Posterior vena cava (tissue), 2 donors: ENCODE measurements at regions of chr16 and their contacts with region 1.

Region 1: DNA sequence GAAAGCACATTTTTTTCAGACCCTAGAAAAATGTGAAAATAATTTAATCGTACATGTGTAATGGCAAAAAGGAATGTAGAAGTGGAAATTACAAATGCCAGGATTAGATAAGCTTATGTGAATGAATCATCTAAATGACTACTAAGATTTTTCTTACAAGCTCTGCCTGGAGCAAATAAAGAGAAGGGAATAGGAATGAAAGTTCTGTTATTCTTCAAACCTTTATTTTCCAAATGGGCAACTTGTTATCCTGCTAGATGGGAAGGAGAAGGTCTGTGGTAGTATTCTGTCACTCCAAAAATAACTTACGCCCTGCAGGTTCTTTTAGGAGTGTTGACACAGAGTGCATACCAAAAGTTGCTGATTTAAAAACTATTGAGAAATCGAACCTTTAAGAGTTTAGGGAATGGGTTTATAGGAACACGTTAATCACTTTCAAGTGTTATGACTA is 9.7 kb downstream of the CTCF start:
- DNase-seq: no peak

Region 2: DNA sequence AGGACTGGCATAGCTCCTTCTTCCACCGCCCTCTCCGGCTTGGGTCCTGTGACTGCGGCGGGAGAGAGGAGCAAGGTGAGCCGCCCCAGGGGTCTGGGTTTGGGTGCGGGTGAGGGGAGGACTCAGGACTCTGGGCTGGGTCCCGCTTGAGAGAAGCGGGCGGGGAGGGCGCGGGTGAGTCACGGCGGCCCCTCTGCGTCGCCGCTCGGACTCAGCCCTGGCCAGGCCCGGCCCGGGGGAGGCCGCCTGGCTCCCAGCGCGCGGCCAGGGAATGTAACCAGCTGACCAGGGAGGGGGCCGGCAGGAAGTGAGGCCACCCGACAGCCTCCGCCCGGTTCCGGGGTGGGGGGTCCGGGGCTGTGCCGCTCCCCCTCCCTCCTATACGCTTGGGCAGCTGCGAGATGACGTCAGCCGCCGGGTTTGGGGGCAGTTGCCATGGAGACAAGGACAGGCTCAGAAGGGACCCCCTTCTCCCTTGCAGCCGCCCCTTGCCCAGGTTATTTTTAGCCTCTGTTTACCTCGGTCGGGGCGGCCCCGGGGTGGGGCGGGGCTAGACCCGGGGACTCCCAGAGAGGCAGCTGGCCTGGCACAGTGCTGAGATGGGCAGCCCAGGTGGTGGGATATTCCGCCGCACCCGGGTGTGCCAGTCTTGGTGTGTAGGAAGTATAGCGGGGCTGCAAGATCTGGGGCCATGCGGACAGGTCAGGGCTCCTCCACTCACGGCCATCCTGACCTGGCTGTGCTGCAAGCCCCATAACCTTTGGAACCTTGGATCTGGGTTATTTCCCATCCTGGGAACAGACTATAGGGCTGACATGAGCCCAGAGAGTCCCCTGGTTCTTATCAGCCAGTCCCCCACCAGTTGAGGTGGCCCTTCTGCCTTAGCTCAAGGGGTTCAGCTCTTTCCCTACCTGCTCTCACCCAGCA is 41.7 kb before region 1 on chr16:
- intact Hi-C with region 1: no loop called
- DNase-seq: peak; percentile 95

Region 3: DNA sequence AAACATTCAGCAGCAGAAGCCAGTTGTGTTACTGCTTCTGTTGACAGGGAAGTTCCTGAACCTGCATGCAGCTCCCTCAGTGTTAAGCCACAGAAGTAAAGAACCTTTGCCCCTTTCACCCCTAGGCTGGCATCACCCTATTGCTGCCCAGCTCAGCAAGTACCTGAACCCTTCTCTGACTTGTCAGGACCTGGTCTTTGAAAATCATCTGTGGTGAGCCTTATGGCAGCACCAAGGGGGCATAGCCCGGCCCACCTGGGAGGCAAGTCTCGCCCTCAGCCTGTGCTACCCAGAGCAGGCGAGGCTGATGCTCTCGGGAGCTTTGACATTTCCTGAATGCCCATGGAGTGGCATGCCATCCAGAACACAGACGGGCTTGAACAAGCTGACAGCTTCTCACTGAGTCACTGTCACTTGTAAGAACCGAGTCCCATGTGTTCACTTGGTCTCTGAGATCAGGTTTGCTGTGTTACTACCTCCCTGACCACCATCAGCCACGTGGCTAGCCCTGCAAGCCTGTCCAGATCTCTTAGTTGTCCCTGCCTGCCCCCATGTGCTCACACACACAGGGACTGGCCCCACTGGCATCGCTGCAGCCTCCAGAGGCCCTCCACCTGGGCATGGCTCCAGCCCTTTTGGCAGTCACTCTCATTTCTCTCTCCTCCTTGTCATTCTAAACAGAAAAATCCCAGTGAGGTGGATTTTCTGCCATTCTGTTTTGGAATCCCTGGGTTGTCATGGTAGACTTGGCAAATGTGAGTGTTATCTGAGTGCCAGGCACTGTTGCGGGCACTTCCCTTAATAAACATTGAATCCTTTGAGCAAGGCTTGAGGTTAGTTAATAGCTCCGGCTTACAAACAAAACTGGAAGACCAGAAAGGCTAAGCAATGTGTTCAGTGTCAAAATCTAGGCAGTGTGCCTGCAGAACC is 70.0 kb after region 1 on chr16:
- intact Hi-C with region 1: loop called in 1 of 2 experiments (anchors 10 kb)
- DNase-seq: no peak